ENCODE measurements at regions of chr14 and their contacts with region 1.

Region 1: GRCh38 chr14:58199726-58200479 is at the start of gene ACTR10:
- DNase-seq: peak; percentile 86 to 91
- ATAC-seq: peak; percentile 82 to 94 (median 86)
- H3K4me3 ChIP-seq: peak within 1 kb of the TSS; percentile 96
- H3K4me3 Mint-ChIP-seq: peak within 1 kb of the TSS; percentile 96
- H3K27ac ChIP-seq: peak within 1 kb of the TSS; percentile 96
- H3K27ac Mint-ChIP-seq: peak within 1 kb of the TSS; percentile 94 to 98
- H3K4me1 ChIP-seq: peaks cover 21% of the 10 kb centered on the region
- H3K4me1 Mint-ChIP-seq: peaks cover 31 to 36% of the 10 kb centered on the region in 2 donors
- H3K27me3 ChIP-seq: no peaks in the 10 kb centered on the region
- H3K27me3 Mint-ChIP-seq: no peaks in the 10 kb centered on the region
- CTCF ChIP-seq: no peak
- total RNA-seq, gene ACTR10: 58.0 to 61.0 (median 60.7) TPM

Region 2: GRCh38 chr14:58239244-58240195 is 39.6 kb after region 1 on chr14:
- intact Hi-C with region 1: loop called (anchors 1 kb)
- DNase-seq: peak; percentile 79 to 91
- ATAC-seq: peak; percentile 30 to 44 (median 40)
- H3K4me3 ChIP-seq: peak overlapping the region; percentile 83
- H3K4me3 Mint-ChIP-seq: no peak overlapping the region
- H3K27ac ChIP-seq: peak overlapping the region; percentile 81
- H3K27ac Mint-ChIP-seq: no peak overlapping the region
- H3K4me1 ChIP-seq: peaks cover 4% of the 10 kb centered on the region
- H3K4me1 Mint-ChIP-seq: peaks cover 7 to 11% of the 10 kb centered on the region in 2 donors
- H3K27me3 ChIP-seq: no peaks in the 10 kb centered on the region
- H3K27me3 Mint-ChIP-seq: no peaks in the 10 kb centered on the region
- CTCF ChIP-seq: no peak

Region 3: GRCh38 chr14:58244556-58245387 is 44.9 kb after region 1 on chr14 and contains the start of gene PSMA3:
- intact Hi-C with region 1: loop called (anchors 1 kb)
- DNase-seq: peak; percentile 97 to 98
- ATAC-seq: peak; percentile 88 to 97 (median 92)
- H3K4me3 ChIP-seq: peak within 1 kb of the TSS; percentile 88
- H3K4me3 Mint-ChIP-seq: peak within 1 kb of the TSS; percentile 99
- H3K27ac ChIP-seq: peak within 1 kb of the TSS; percentile 94
- H3K27ac Mint-ChIP-seq: peak within 1 kb of the TSS; percentile 95 to 99
- H3K4me1 ChIP-seq: peaks cover 5% of the 10 kb centered on the region
- H3K4me1 Mint-ChIP-seq: peaks cover 29 to 35% of the 10 kb centered on the region in 2 donors
- H3K27me3 ChIP-seq: no peaks in the 10 kb centered on the region
- H3K27me3 Mint-ChIP-seq: no peaks in the 10 kb centered on the region
- CTCF ChIP-seq: no peak
- total RNA-seq, gene PSMA3: 107 to 120 (median 115) TPM

Region 4: GRCh38 chr14:58297762-58298476 is 98.0 kb after region 1 on chr14:
- intact Hi-C with region 1: loop called (anchors 1 kb)
- DNase-seq: peak; percentile 96 to 100
- ATAC-seq: peak; percentile 82 to 95 (median 85)
- H3K4me3 ChIP-seq: peak overlapping the region; percentile 96
- H3K4me3 Mint-ChIP-seq: no peak overlapping the region
- H3K27ac ChIP-seq: peak overlapping the region; percentile 97
- H3K27ac Mint-ChIP-seq: no peak overlapping the region
- H3K4me1 ChIP-seq: peaks cover 11% of the 10 kb centered on the region
- H3K4me1 Mint-ChIP-seq: peaks cover 27 to 40% of the 10 kb centered on the region in 2 donors
- H3K27me3 ChIP-seq: no peaks in the 10 kb centered on the region
- H3K27me3 Mint-ChIP-seq: no peaks in the 10 kb centered on the region
- CTCF ChIP-seq: no peak

Measured in natural killer cell (primary cell).